Breast epithelium (tissue), 4 donors: ENCODE measurements at regions of chr14 and their contacts with region 1.

Region 1: DNA sequence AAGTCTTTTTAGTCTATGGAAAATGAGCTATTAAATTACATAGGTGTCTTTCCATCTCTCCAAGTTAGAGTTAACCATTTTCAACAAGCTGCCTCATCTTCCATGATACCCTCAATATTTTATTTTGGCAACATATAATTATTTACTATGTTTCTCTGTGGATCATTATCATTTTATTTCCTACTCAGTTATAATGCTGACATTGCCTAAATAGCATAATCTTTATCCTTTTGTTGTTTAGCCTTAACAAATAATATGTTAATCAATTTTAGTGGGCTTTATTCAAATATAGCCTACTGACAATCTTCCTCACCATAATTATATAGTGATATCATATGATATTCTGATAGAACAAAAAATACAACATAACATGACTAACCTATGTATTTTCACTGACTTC is 1044.8 kb upstream of the FOXG1 start:
- DNase-seq: no peak
- H3K4me3 ChIP-seq: no peak overlapping the region
- H3K27ac ChIP-seq: no peak overlapping the region
- H3K4me1 ChIP-seq: no peaks in the 10 kb centered on the region
- H3K27me3 ChIP-seq: no peaks in the 10 kb centered on the region
- CTCF ChIP-seq: no peak
- POLR2A ChIP-seq: no peak

Region 2: GRCh38 chr14:28542040-28542439 is 820.3 kb after region 1 on chr14:
- intact Hi-C with region 1: loop called (anchors 5 kb)
- DNase-seq: no peak
- H3K4me3 ChIP-seq: no peak overlapping the region
- H3K27ac ChIP-seq: no peak overlapping the region
- H3K4me1 ChIP-seq: no peaks in the 10 kb centered on the region
- H3K27me3 ChIP-seq: no peaks in the 10 kb centered on the region
- CTCF ChIP-seq: no peak
- POLR2A ChIP-seq: no peak